Left cardiac atrium (tissue), 4 donors: ENCODE measurements at regions of chr19 and their contacts with region 1.

Region 1: GRCh38 chr19:43784981-43785808 is 4.4 kb upstream of the KCNN4 start:
- DNase-seq: peak; percentile 51
- ATAC-seq: peak; percentile 82 to 84

Region 2: DNA sequence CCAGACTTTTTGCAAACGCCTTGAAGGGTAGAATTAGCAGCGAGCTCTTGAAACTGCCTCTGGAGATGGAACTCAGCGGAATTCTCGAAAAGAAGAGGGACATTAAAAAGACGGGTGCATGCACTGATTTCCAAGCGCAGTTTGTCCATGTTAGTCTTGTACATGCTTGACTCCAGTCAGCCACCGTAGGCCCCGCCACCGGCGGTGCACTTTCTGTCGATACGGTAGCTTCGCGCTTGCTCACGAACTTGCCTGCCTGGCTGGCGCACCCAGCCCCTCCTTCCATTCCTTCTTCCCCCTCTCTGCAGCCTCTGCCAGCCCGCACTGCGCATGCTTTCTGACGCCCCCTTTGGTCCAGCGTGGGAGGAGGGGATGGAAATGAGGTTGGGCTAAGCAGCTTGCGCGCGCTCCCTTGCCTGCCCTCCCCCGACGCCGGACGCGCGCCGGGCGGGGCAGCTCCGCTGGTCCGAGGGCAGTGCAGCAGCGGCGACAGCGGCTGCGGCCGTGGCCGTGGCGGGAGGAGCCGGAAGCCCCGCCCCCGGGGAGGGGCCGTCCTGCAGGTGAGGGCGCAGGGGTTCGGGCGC is 252.1 kb before region 1 on chr19 and contains the start of gene ZNF575:
- intact Hi-C with region 1: loop called in 1 of 2 experiments (anchors 10 kb)
- DNase-seq: peak; percentile 89
- ATAC-seq: peak; percentile 82 to 83
- total RNA-seq, gene ZNF575: 1.1 to 1.6 TPM

Region 3: GRCh38 chr19:43738780-43739211 is 46.4 kb before region 1 on chr19:
- intact Hi-C with region 1: loop called in 1 of 2 experiments (anchors 5 kb)
- DNase-seq: no peak
- ATAC-seq: peak; percentile 34

Region 4: GRCh38 chr19:43747557-43748204 is 37.5 kb before region 1 on chr19:
- intact Hi-C with region 1: loop called (anchors 2 to 5 kb)
- DNase-seq: no peak
- ATAC-seq: no peak

Region 5: DNA sequence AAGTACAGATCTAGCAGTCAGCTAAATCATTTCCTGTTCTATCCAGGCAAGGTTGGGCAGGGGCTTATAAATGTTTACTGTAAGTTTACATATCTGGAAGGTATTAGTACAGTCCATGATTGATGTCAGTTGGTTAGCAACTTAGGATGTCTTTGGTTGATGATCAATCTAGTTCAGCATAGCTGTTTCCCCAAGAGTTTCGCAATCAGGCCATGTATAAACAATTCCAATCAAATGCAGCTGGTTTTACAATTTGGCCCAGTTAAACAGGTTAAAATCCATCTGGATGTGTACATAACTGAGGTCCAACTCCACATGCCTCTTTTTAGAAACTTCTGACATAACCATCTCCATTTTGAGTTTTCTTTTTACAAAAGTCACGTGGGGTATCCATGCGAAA is 172.7 kb after region 1 on chr19:
- intact Hi-C with region 1: no loop called
- DNase-seq: no peak
- ATAC-seq: no peak